G401 (cell line): ENCODE measurements at regions of chr17 and their contacts with region 1.

Region 1: DNA sequence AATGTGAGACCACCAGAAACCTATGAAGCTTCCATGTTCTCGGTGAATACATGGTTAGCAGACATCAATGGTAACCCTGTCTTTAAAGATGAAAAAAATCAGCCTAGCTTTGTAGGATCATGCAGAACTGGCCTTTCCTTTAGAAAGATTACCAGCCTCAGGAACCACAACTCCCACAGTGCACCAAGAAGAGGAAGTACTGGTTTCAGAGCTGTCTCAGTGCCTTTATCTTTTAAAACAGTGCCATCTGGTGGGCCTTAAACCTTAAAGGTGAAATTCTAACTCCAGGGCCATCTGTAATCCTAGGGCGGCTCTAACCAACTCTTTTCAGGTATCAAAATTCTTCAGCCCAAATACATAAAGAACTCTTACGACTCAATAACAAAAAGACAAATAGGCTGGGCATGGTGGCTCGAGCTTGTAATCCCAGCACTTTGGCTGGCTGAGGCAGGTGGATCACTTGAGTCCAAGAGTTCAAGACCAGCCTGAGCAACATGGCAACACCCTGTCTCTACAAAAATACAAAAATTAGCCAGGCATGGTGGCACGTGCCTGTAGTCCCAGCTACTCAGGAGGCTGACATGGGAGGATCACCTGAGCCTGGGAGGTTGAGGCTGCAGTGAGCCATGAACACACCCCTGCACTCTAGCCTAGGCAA is 5.4 kb downstream of the ATPAF2 start:
- DNase-seq: peak; percentile 91

Region 2: DNA sequence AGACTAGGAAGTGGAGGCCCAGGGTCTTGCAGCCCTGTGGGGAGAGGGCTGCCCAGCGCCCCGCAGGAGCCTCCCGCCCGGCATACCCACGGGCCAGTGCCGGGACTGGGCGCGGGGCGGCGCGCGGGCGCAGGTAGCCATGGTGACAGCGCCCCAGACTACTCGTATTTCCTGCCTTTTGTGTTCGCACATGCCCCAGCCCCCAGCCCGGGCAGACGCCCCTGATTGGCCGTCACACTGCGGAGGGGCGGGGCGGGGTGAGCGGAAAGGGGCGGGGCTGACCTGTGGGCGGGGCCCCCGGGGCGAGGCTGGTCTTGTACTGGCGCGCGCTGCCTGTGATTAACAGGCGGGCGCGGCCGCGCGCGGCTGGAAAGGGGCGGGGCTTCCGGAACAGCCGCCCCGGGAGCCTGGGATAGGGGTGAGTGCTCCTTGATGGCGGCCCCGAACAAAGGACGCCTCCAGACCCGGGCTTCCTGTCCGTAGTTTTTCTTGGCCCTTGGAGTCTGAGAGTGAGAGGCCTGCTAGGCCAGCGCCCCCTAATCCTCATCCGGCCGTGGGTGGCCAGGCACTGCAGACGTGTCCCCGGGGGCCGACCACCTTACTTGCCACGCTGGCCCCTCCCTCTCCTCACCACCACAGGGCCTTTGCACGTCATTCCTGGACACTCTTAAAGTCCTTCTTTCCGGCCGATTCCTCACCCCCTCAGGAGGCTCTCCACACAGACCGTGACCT is 281.3 kb before region 1 on chr17:
- in situ Hi-C with region 1: no loop called
- DNase-seq: peak; percentile 85

Region 3: GRCh38 chr17:17994271-17995069 is 39.1 kb before region 1 on chr17:
- in situ Hi-C with region 1: loop called (anchors 5 kb)
- DNase-seq: peak; percentile 33